Heart left ventricle (tissue), 16 donors: ENCODE measurements at regions of chr7 and their contacts with region 1.

Region 1: DNA sequence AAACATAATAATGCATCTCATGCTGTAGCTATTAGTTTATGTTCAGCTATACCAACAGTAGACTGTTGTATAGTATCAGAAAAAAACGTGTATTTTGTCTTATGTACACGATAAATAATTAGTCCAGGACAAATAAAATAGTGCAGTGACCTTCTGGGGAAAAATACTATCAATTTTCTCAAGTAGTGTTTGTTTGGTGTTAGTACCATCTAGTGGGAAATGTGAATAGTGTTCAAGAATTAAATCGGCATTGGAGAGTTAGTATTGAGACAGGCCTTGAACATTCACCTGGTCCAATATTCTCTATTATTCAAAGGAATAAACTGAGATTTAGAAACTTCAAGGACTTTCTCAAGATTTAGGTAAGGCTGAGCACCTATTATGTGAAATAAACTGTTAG is 21.7 kb upstream of the OR2A5 start:
- DNase-seq: no peak
- ATAC-seq: peak in 1 of 4 donors; percentile 55
- H3K4me3 ChIP-seq: no peak overlapping the region
- H3K27ac ChIP-seq: no peak overlapping the region
- H3K4me1 ChIP-seq: no peaks in the 10 kb centered on the region
- H3K27me3 ChIP-seq: no peaks in the 10 kb centered on the region
- CTCF ChIP-seq: peak; percentile 23 to 67 (median 56)
- POLR2A ChIP-seq: no peak

Region 2: GRCh38 chr7:143436325-143436946 is 590.6 kb before region 1 on chr7:
- intact Hi-C with region 1: no loop called
- DNase-seq: no peak
- ATAC-seq: no peak
- H3K4me3 ChIP-seq: no peak overlapping the region
- H3K27ac ChIP-seq: no peak overlapping the region
- H3K4me1 ChIP-seq: no peaks in the 10 kb centered on the region
- H3K27me3 ChIP-seq: no peaks in the 10 kb centered on the region
- CTCF ChIP-seq: no peak
- POLR2A ChIP-seq: no peak

Region 3: DNA sequence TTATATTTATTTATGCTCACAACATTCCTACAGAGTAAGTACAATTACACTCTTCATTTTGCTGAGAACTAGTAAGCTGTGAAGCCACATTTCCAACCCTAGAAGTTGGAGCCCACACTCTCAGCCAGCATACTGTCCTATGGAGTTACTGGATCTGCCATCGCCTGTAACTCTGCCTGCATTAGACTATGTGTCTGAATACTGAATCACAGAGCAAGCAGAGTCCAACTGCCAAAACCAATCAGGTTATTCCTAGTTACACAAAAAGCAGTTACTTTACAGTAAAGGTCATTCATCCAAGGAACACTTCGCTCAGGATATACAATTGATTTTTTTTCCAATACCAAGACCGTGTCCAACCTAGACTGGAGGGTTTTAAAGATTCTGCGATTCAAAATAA is 291.1 kb before region 1 on chr7:
- intact Hi-C with region 1: loop called in 1 of 10 experiments (anchors 5 kb)
- DNase-seq: no peak
- ATAC-seq: no peak
- H3K4me3 ChIP-seq: no peak overlapping the region
- H3K27ac ChIP-seq: no peak overlapping the region
- H3K4me1 ChIP-seq: peaks cover 0 to 5% (median 0%) of the 10 kb centered on the region in 12 donors
- H3K27me3 ChIP-seq: no peaks in the 10 kb centered on the region
- CTCF ChIP-seq: no peak
- POLR2A ChIP-seq: no peak

Region 4: GRCh38 chr7:143901668-143902331 is 125.3 kb before region 1 on chr7 and contains the start of gene TCAF1:
- intact Hi-C with region 1: loop called in 4 of 10 experiments (anchors 5 to 10 kb)
- DNase-seq: peak; percentile 97 to 98 (median 97)
- ATAC-seq: peak; percentile 97 to 99 (median 99)
- H3K4me3 ChIP-seq: peak within 1 kb of the TSS; percentile 62 to 99 (median 89)
- H3K27ac ChIP-seq: peak within 1 kb of the TSS; percentile 86 to 98 (median 96)
- H3K4me1 ChIP-seq: peaks cover 0 to 41% (median 22%) of the 10 kb centered on the region in 12 donors
- H3K27me3 ChIP-seq: no peaks in the 10 kb centered on the region
- CTCF ChIP-seq: peak in 8 of 12 donors; percentile 17 to 50 (median 36)
- POLR2A ChIP-seq: peak in 1 of 2 donors; percentile 81
- total RNA-seq, gene TCAF1: 31.4 to 71.1 (median 58.0) TPM

Region 5: DNA sequence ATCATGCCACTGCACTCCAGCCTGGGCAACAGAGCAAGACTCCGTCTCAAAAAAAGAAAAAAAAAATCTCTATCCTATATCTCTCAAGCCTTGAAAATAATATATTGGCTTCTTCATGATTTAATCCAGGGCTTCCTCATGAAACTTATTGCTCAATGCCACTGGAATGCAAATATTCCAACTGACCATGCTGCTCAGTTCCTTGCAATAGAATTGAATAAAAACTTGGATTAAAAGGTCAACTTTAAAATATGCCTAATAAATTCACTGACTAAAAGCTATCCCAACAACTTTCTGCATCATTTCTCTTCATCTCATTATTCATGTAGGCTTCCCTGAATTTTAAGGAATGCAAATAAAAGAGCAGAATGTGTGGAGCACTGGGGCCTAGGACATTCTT is 418.5 kb after region 1 on chr7:
- intact Hi-C with region 1: no loop called
- DNase-seq: no peak
- ATAC-seq: no peak
- H3K4me3 ChIP-seq: no peak overlapping the region
- H3K27ac ChIP-seq: no peak overlapping the region
- H3K4me1 ChIP-seq: no peaks in the 10 kb centered on the region
- H3K27me3 ChIP-seq: no peaks in the 10 kb centered on the region
- CTCF ChIP-seq: no peak
- POLR2A ChIP-seq: no peak